ENCODE measurements at regions of chr19 and their contacts with region 1.

Region 1: DNA sequence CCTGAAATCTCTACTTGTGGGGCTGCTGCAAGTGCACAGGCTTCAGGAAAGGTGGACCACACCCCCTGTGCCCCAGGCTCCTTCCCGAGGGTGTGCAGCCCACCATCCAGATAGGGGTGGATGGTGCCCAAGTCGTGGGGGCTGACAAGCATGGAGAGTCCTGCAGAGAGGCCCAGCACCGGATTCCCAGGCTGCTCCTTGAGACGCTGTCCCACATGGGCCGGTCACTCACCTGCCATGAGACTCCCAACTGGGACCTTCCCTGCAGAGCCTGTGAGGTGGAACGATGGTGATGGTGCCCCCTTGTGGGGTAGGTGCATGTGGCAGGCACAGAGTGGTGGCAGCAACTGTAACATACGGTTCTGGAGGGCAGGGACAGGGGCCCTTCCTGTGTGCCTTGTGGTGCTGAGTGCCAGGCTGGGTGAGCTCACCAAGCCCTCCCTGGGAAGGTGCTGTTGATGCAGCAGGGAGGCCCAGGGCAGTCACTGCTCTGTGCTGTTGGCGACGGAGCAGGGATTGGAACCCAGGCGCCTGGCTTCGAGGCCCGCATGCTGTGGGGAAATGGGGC is 33.0 kb downstream of the PPP1R37 start:
- DNase-seq: peak; percentile 72 to 86 (median 84)
- H3K4me3 ChIP-seq: no peak overlapping the region
- H3K27ac ChIP-seq: peak overlapping the region in 3 of 5 donors; percentile 32 to 50 (median 43)
- H3K4me1 ChIP-seq: peaks cover 0 to 35% of the 10 kb centered on the region in 2 donors
- H3K27me3 ChIP-seq: no peaks in the 10 kb centered on the region
- CTCF ChIP-seq: peak; percentile 57 to 76 (median 71)
- POLR2A ChIP-seq: no peak

Region 2: DNA sequence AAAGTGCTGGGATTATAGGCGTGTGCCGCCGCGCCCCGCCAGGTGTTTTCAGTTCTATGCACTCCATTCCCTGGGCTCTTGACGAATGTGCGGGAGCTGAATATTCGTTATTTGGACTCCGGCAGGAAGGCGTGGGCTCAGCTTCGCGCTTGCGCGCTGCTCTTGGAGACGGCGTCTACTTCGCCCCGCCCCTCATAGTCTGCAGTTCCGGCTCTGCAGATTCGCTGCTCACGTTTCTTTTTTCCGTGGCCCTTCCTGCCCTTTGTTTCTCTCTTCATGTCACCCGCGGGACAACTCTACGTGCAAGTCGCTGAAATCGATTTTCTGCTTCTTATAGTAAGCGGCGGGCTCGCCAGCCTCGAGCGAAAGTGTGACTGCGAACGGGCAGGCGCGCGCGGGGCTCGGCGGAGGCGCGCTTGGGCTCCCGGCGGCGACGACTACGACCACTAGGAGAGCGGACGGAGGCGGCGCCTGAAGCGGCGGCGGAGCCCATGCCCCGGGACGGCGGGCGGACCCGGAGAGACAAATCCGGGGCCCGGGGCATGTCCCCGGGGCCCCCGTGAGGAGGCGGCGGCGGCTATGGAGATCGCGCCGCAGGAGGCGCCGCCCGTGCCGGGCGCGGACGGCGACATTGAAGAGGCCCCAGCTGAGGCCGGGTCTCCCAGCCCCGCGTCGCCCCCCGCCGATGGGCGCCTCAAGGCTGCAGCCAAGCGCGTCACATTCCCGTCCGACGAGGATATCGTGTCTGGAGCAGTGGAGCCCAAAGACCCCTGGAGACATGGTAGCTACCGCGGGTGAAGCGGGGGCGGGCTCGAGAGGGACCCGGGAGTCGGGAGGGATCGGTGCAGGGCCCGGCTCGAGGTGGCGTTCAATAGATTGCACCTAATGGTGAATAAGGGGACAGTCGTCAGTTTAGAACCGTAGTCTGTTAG is 33.0 kb before region 1 on chr19 and contains the start of gene PPP1R37:
- intact Hi-C with region 1: loop called in 1 of 2 experiments (anchors 5 kb)
- DNase-seq: peak; percentile 94 to 98 (median 96)
- H3K4me3 ChIP-seq: peak within 1 kb of the TSS; percentile 46 to 97 (median 85)
- H3K27ac ChIP-seq: peak within 1 kb of the TSS; percentile 78 to 99 (median 92)
- H3K4me1 ChIP-seq: peaks cover 35 to 54% of the 10 kb centered on the region in 2 donors
- H3K27me3 ChIP-seq: no peaks in the 10 kb centered on the region
- CTCF ChIP-seq: peak in 5 of 6 experiments; percentile 16 to 53 (median 42)
- POLR2A ChIP-seq: peak; percentile 61 to 89
- total RNA-seq, gene PPP1R37: 24.3 to 86.7 (median 53.1) TPM